Calu3 (cell line): ENCODE measurements at regions of chr18 and their contacts with region 1.

Region 1: DNA sequence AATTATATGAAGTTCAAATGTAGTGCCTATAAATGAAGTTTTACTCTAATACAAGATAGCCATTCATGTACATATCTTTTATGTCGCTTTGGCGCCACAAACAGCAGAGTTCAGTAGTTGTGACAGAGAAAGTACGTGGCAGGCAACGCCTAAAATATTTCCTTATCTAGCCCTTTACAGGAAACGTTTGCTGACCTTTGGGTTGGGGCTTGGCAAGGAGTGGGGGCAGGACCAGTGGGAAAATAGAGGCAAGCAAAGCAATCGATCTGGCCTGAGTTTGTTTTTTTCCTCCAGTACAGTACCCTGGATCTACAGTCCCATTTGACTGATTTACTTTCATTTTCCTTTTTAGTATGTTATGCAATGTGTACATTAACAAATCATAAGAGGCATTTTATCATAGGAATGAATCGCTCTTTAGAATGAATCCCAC is 13.1 kb downstream of the CCDC68 start:
- DNase-seq: peak; percentile 85
- H3K4me3 Mint-ChIP-seq: peak overlapping the region; percentile 62
- H3K27ac Mint-ChIP-seq: peak overlapping the region; percentile 93
- H3K4me1 Mint-ChIP-seq: peaks cover 54% of the 10 kb centered on the region
- H3K27me3 Mint-ChIP-seq: no peaks in the 10 kb centered on the region
- CTCF ChIP-seq: no peak

Region 2: GRCh38 chr18:54558609-54559585 is 387.3 kb before region 1 on chr18:
- CTCF ChIA-PET with region 1: no interaction called
- intact Hi-C with region 1: loop called (anchors 5 kb)
- DNase-seq: peak; percentile 34
- H3K4me3 Mint-ChIP-seq: no peak overlapping the region
- H3K27ac Mint-ChIP-seq: no peak overlapping the region
- H3K4me1 Mint-ChIP-seq: no peaks in the 10 kb centered on the region
- H3K27me3 Mint-ChIP-seq: no peaks in the 10 kb centered on the region
- CTCF ChIP-seq: peak; percentile 68

Region 3: DNA sequence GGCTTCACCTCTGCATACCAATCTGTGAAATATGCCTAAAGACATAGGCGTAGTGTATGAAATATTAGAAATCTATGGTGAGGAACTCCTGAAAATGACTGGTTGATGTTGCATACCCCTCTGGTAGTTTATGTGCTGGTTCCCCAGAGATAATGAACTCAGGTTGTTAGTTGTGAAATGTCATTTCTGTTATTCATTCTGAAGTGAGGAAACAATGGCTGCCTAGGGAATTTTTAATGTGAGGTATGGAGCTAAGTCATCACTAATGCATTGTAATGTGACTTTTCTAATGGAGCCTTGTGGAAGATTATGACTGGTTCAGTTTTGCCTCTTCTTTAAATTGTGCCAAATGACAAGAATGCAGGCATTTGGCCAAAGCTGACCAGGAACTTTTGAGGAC is 179.5 kb before region 1 on chr18:
- CTCF ChIA-PET with region 1: no interaction called
- intact Hi-C with region 1: loop called (anchors 2 kb)
- DNase-seq: no peak
- H3K4me3 Mint-ChIP-seq: peak overlapping the region; percentile 23
- H3K27ac Mint-ChIP-seq: peak overlapping the region; percentile 82
- H3K4me1 Mint-ChIP-seq: peaks cover 85% of the 10 kb centered on the region
- H3K27me3 Mint-ChIP-seq: no peaks in the 10 kb centered on the region
- CTCF ChIP-seq: no peak

Region 4: DNA sequence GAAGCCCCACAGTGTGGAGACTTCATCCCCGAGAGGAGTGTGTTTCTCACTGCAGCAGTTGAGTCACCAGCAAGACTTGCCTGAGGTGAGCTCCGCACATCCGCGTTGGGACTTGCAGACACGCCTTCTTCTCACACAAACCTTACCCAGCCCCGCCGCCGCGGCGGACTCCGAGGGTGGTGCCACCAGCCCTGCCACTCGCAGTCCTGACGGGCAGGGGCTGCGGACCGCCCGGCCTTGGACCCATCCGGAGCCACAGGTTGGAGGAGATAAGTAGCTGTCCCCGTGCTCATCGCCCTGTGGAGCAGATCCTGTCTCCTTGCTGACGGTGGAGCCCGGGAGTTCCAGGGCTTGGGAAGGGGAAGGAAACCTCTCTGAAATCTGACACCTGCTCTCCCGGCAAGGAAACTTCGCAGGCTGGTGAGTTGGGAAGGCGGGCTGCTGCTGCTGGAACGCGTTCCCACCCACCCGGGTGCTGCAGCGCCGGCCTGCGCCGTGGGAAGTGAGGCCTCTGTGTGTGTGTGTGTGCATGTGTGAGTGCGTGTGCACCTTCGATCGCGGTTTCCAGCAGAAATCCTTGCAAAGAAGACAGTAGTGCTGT is 117.8 kb before region 1 on chr18 and contains the start of gene RAB27B:
- CTCF ChIA-PET with region 1: no interaction called
- intact Hi-C with region 1: loop called (anchors 2 kb)
- DNase-seq: peak; percentile 92
- H3K4me3 Mint-ChIP-seq: peak within 1 kb of the TSS; percentile 95
- H3K27ac Mint-ChIP-seq: peak within 1 kb of the TSS; percentile 84
- H3K4me1 Mint-ChIP-seq: peaks cover 67% of the 10 kb centered on the region
- H3K27me3 Mint-ChIP-seq: no peaks in the 10 kb centered on the region
- CTCF ChIP-seq: no peak
- total RNA-seq, gene RAB27B: 38.3 and 60.6 TPM in 2 replicates

Region 5: DNA sequence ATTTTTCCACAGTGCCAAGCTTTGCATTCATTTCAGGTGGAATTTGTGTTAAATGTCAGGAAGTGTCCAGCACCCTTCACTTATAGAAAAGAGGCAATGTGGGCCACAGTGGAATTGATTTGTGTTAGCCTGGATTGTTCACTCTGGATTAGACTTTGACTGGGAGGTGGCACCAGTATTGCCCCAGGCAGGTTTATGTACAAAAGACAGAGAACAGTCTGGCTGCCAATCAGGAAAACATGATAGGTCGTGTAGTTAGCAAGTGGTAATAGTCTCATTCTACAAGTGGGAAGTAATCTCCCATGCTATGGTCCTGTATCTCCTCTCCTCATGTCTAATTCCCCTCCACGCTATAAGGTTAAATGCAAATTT is 72.3 kb before region 1 on chr18:
- CTCF ChIA-PET with region 1: no interaction called
- intact Hi-C with region 1: loop called (anchors 5 kb)
- DNase-seq: peak; percentile 44
- H3K4me3 Mint-ChIP-seq: peak overlapping the region; percentile 3
- H3K27ac Mint-ChIP-seq: peak overlapping the region; percentile 72
- H3K4me1 Mint-ChIP-seq: peaks cover 26% of the 10 kb centered on the region
- H3K27me3 Mint-ChIP-seq: no peaks in the 10 kb centered on the region
- CTCF ChIP-seq: no peak

Region 6: GRCh38 chr18:55048892-55049291 is 102.7 kb after region 1 on chr18:
- CTCF ChIA-PET with region 1: no interaction called
- intact Hi-C with region 1: no loop called
- DNase-seq: no peak
- H3K4me3 Mint-ChIP-seq: no peak overlapping the region
- H3K27ac Mint-ChIP-seq: peak overlapping the region; percentile 97
- H3K4me1 Mint-ChIP-seq: peaks cover 26% of the 10 kb centered on the region
- H3K27me3 Mint-ChIP-seq: no peaks in the 10 kb centered on the region
- CTCF ChIP-seq: no peak